ENCODE measurements at regions of chr16 and their contacts with region 1.

Region 1: DNA sequence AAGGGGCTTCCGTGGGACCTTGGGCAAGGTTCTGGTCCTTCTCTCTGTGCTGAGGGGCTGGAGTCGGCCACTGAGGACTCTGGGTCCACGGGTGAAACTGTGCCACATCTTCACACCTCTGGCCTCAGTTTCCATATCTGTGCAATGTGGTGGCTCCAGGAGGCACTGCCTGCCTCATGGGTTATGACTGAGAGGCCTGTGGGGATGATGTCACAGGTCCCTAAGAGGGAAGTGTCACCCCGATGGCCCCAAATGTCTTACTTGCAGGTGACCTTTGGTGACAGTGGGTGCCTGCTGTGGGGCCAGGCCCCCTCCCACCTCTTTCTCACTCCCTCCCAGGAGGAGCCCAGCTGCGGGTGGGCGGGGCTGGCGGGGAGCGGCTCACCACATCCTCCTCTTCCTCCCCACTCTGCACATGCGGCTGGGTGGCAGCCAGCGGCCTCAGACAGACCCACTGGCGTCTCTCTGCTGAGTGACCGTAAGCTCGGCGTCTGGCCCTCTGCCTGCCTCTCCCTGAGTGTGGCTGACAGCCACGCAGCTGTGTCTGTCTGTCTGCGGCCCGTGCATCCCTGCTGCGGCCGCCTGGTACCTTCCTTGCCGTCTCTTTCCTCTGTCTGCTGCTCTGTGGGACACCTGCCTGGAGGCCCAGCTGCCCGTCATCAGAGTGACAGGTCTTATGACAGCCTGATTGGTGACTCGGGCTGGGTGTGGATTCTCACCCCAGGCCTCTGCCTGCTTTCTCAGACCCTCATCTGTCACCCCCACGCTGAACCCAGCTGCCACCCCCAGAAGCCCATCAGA is at the start of gene IL21R:
- DNase-seq: peak; percentile 85 to 95 (median 88)
- H3K4me3 ChIP-seq: peak within 1 kb of the TSS; percentile 69 to 98
- H3K4me3 Mint-ChIP-seq: peak within 1 kb of the TSS; percentile 94 to 99 (median 98)
- H3K27ac ChIP-seq: peak within 1 kb of the TSS; percentile 83
- H3K27ac Mint-ChIP-seq: peak within 1 kb of the TSS; percentile 93 to 99 (median 96)
- H3K4me1 ChIP-seq: peaks cover 52% of the 10 kb centered on the region
- H3K4me1 Mint-ChIP-seq: peaks cover 34 to 79% (median 54%) of the 10 kb centered on the region in 4 donors
- H3K27me3 ChIP-seq: no peaks in the 10 kb centered on the region
- H3K27me3 Mint-ChIP-seq: no peaks in the 10 kb centered on the region
- total RNA-seq, gene IL21R: 28.3 to 29.1 TPM

Region 2: GRCh38 chr16:27326738-27327585 is 75.0 kb before region 1 on chr16:
- CTCF ChIA-PET with region 1: no interaction called
- POLR2A ChIA-PET with region 1: no interaction called
- intact Hi-C with region 1: no loop called
- DNase-seq: peak in 3 of 5 donors; percentile 24 to 47 (median 31)
- H3K4me3 ChIP-seq: no peak overlapping the region
- H3K4me3 Mint-ChIP-seq: peak overlapping the region; percentile 48 to 76 (median 64)
- H3K27ac ChIP-seq: peak overlapping the region; percentile 34
- H3K27ac Mint-ChIP-seq: peak overlapping the region; percentile 64 to 95 (median 85)
- H3K4me1 ChIP-seq: peaks cover 86% of the 10 kb centered on the region
- H3K4me1 Mint-ChIP-seq: peaks cover 45 to 92% (median 75%) of the 10 kb centered on the region in 4 donors
- H3K27me3 ChIP-seq: no peaks in the 10 kb centered on the region
- H3K27me3 Mint-ChIP-seq: no peaks in the 10 kb centered on the region

Region 3: GRCh38 chr16:27374804-27375425 is 27.1 kb before region 1 on chr16:
- CTCF ChIA-PET with region 1: interaction called, 10 read pairs
- POLR2A ChIA-PET with region 1: interaction called, 46 read pairs
- intact Hi-C with region 1: no loop called
- DNase-seq: peak in 3 of 5 donors; percentile 15 to 60 (median 28)
- H3K4me3 ChIP-seq: no peak overlapping the region
- H3K4me3 Mint-ChIP-seq: no peak overlapping the region
- H3K27ac ChIP-seq: no peak overlapping the region
- H3K27ac Mint-ChIP-seq: no peak overlapping the region
- H3K4me1 ChIP-seq: peaks cover 67% of the 10 kb centered on the region
- H3K4me1 Mint-ChIP-seq: peaks cover 21 to 33% (median 26%) of the 10 kb centered on the region in 4 donors
- H3K27me3 ChIP-seq: no peaks in the 10 kb centered on the region
- H3K27me3 Mint-ChIP-seq: no peaks in the 10 kb centered on the region

Region 4: DNA sequence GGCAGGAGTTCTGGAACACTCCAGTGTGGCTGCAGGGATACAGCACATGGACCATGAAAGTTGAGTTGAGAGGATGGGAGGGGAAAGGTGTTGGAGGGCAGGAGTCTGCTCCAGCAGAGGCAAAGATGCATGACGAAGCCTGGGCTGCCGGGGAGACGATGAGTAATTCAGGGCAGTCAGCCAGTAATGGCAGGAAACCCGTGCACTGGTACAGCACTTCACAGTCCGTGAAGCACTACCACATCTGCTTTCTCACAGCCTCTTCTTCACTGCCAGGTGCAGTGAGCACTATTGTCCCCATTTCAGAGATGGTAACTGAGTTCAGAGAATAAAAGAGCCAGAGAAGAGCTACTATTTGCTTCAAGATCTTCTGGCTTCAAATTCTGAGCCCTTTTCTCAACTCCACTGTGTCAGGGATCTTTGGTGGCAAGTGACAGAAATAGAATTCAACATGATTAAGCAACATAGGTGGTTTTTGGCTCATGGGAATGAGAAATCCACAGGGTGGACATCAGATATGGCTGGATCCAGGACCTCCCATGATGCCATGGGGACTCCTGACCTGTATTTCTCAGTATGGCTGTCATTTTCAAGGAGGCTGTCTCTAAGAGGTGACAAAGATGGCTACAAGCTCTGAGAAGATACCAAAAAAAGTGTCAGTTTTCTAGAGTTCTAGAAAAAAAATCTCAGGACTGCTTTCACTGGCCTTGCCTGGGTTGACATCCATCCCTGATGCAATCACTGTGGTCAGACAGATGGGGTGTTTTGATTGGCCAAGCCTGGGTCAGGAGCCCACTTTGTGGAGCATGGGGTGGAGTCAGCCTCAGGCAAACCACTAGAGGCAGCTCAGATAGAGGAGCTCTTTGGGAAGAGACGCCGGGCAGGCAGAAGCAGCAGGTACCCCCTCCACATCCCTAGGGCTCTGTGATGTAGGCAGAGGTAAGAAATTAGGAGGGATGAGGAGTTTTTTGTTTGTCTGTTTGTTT is 24.7 kb after region 1 on chr16:
- CTCF ChIA-PET with region 1: interaction called, 5 read pairs
- POLR2A ChIA-PET with region 1: interaction called, 8 read pairs
- intact Hi-C with region 1: loop called (anchors 2 kb)
- DNase-seq: peak; percentile 53 to 87 (median 62)
- H3K4me3 ChIP-seq: no peak overlapping the region
- H3K4me3 Mint-ChIP-seq: peak overlapping the region in 5 of 8 donors; percentile 0 to 70 (median 39)
- H3K27ac ChIP-seq: peak overlapping the region; percentile 38
- H3K27ac Mint-ChIP-seq: peak overlapping the region; percentile 62 to 93 (median 90)
- H3K4me1 ChIP-seq: peaks cover 33% of the 10 kb centered on the region
- H3K4me1 Mint-ChIP-seq: peaks cover 20 to 44% (median 31%) of the 10 kb centered on the region in 4 donors
- H3K27me3 ChIP-seq: no peaks in the 10 kb centered on the region
- H3K27me3 Mint-ChIP-seq: no peaks in the 10 kb centered on the region

Region 5: GRCh38 chr16:27449434-27450195 is 47.6 kb after region 1 on chr16:
- CTCF ChIA-PET with region 1: interaction called, 5 read pairs
- POLR2A ChIA-PET with region 1: interaction called, 26 read pairs
- intact Hi-C with region 1: loop called (anchors 1 kb)
- DNase-seq: peak; percentile 72 to 94 (median 80)
- H3K4me3 ChIP-seq: no peak overlapping the region
- H3K4me3 Mint-ChIP-seq: peak overlapping the region in 7 of 8 donors; percentile 50 to 88 (median 68)
- H3K27ac ChIP-seq: peak overlapping the region; percentile 53
- H3K27ac Mint-ChIP-seq: peak overlapping the region; percentile 80 to 99 (median 94)
- H3K4me1 ChIP-seq: peaks cover 74% of the 10 kb centered on the region
- H3K4me1 Mint-ChIP-seq: peaks cover 44 to 89% (median 70%) of the 10 kb centered on the region in 4 donors
- H3K27me3 ChIP-seq: no peaks in the 10 kb centered on the region
- H3K27me3 Mint-ChIP-seq: no peaks in the 10 kb centered on the region

Region 6: GRCh38 chr16:27737513-27737912 is 335.5 kb after region 1 on chr16:
- CTCF ChIA-PET with region 1: no interaction called
- POLR2A ChIA-PET with region 1: no interaction called
- intact Hi-C with region 1: no loop called
- DNase-seq: no peak
- H3K4me3 ChIP-seq: no peak overlapping the region
- H3K4me3 Mint-ChIP-seq: no peak overlapping the region
- H3K27ac ChIP-seq: no peak overlapping the region
- H3K27ac Mint-ChIP-seq: peak overlapping the region in 1 of 7 donors; percentile 19
- H3K4me1 ChIP-seq: no peaks in the 10 kb centered on the region
- H3K4me1 Mint-ChIP-seq: no peaks in the 10 kb centered on the region
- H3K27me3 ChIP-seq: no peaks in the 10 kb centered on the region
- H3K27me3 Mint-ChIP-seq: no peaks in the 10 kb centered on the region

Measured in CD4-positive, alpha-beta memory T cell (primary cell).